Caco-2 (cell line): ENCODE measurements at regions of chr16 and their contacts with region 1.

Region 1: GRCh38 chr16:58487566-58488351 is 12.2 kb upstream of the NDRG4 start:
- DNase-seq: peak; percentile 90 to 92
- H3K4me3 ChIP-seq: no peak overlapping the region
- H3K4me3 Mint-ChIP-seq: no peak overlapping the region
- H3K27ac Mint-ChIP-seq: no peak overlapping the region
- H3K4me1 ChIP-seq: no peaks in the 10 kb centered on the region
- H3K4me1 Mint-ChIP-seq: no peaks in the 10 kb centered on the region
- H3K27me3 ChIP-seq: no peaks in the 10 kb centered on the region
- H3K27me3 Mint-ChIP-seq: peaks cover 4% of the 10 kb centered on the region
- CTCF ChIP-seq: peak; percentile 98 to 99

Region 2: DNA sequence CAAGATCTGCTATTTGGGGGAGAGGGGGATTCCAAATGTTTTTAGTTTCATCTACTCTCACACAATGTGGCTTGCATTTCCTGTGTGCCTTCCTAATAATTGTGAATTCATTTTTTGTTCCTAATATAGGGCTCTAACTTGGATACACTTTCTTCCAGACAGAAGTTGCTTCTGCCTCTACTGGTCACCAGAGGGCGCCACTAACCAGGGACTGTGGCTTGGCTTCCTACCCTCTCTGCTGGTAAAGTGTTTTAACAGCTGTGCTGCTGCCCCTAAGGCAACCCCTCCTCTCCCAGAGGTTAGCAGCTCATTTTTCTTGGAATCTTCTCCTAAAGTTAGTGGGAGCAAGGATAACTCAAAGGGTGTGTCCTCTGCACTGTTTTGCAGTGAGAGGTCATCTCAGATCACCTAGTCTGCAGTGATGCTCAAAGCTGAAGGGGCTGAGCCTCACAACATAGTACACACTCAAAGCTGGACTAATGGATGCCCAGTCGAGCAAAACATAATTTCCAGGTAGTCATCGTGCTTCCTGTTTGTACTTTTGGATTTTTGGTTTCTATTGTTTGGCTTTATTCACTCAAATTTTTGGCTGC is 187.9 kb before region 1 on chr16:
- CTCF ChIA-PET with region 1: interaction called, 5 read pairs
- POLR2A ChIA-PET with region 1: no interaction called
- intact Hi-C with region 1: loop called (anchors 1 kb)
- DNase-seq: peak in 1 of 2 experiments; percentile 32
- H3K4me3 ChIP-seq: no peak overlapping the region
- H3K4me3 Mint-ChIP-seq: no peak overlapping the region
- H3K27ac Mint-ChIP-seq: no peak overlapping the region
- H3K4me1 ChIP-seq: no peaks in the 10 kb centered on the region
- H3K4me1 Mint-ChIP-seq: no peaks in the 10 kb centered on the region
- H3K27me3 ChIP-seq: no peaks in the 10 kb centered on the region
- H3K27me3 Mint-ChIP-seq: peaks cover 5% of the 10 kb centered on the region
- CTCF ChIP-seq: peak; percentile 60 to 63

Region 3: GRCh38 chr16:58392215-58393137 is 95.3 kb before region 1 on chr16 and contains the start of gene GINS3:
- CTCF ChIA-PET with region 1: interaction called, 5 read pairs
- POLR2A ChIA-PET with region 1: no interaction called
- intact Hi-C with region 1: loop called (anchors 5 kb)
- DNase-seq: peak; percentile 95 to 96
- H3K4me3 ChIP-seq: peak within 1 kb of the TSS; percentile 82
- H3K4me3 Mint-ChIP-seq: peak within 1 kb of the TSS; percentile 98
- H3K27ac Mint-ChIP-seq: peak within 1 kb of the TSS; percentile 97
- H3K4me1 ChIP-seq: no peaks in the 10 kb centered on the region
- H3K4me1 Mint-ChIP-seq: no peaks in the 10 kb centered on the region
- H3K27me3 ChIP-seq: no peaks in the 10 kb centered on the region
- H3K27me3 Mint-ChIP-seq: peaks cover 9% of the 10 kb centered on the region
- CTCF ChIP-seq: no peak
- total RNA-seq, gene GINS3: 14.2 and 15.2 TPM in 2 replicates

Region 4: GRCh38 chr16:58402796-58403195 is 85.0 kb before region 1 on chr16:
- CTCF ChIA-PET with region 1: no interaction called
- POLR2A ChIA-PET with region 1: no interaction called
- intact Hi-C with region 1: no loop called
- DNase-seq: no peak
- H3K4me3 ChIP-seq: no peak overlapping the region
- H3K4me3 Mint-ChIP-seq: no peak overlapping the region
- H3K27ac Mint-ChIP-seq: no peak overlapping the region
- H3K4me1 ChIP-seq: no peaks in the 10 kb centered on the region
- H3K4me1 Mint-ChIP-seq: no peaks in the 10 kb centered on the region
- H3K27me3 ChIP-seq: no peaks in the 10 kb centered on the region
- H3K27me3 Mint-ChIP-seq: no peaks in the 10 kb centered on the region
- CTCF ChIP-seq: no peak

Region 5: DNA sequence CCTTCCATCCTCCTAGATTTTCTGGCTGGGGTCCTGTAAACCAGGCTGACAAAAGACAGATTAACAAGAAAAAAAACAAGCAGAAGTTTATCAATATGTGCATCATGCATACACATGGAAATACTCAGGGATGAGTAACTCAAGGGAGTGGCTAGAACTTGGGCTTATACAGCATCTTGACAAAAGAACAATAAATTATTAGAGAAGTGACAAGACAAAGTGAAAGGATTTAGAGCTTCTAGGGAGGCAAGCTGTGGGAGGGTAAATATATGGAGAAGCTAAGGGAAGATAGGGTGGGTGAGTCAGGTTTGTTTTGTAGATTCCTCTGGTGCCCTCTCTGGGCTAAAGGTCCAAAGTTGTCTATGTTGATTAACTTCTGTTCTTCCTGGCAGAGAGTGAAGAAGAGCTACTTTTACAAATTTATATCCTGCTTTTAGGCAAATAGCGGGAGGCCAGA is 35.8 kb before region 1 on chr16:
- CTCF ChIA-PET with region 1: interaction called, 12 read pairs
- POLR2A ChIA-PET with region 1: no interaction called
- intact Hi-C with region 1: no loop called
- DNase-seq: peak in 1 of 2 experiments; percentile 49
- H3K4me3 ChIP-seq: no peak overlapping the region
- H3K4me3 Mint-ChIP-seq: no peak overlapping the region
- H3K27ac Mint-ChIP-seq: no peak overlapping the region
- H3K4me1 ChIP-seq: peaks cover 33% of the 10 kb centered on the region
- H3K4me1 Mint-ChIP-seq: peaks cover 25% of the 10 kb centered on the region
- H3K27me3 ChIP-seq: no peaks in the 10 kb centered on the region
- H3K27me3 Mint-ChIP-seq: no peaks in the 10 kb centered on the region
- CTCF ChIP-seq: no peak

Region 6: DNA sequence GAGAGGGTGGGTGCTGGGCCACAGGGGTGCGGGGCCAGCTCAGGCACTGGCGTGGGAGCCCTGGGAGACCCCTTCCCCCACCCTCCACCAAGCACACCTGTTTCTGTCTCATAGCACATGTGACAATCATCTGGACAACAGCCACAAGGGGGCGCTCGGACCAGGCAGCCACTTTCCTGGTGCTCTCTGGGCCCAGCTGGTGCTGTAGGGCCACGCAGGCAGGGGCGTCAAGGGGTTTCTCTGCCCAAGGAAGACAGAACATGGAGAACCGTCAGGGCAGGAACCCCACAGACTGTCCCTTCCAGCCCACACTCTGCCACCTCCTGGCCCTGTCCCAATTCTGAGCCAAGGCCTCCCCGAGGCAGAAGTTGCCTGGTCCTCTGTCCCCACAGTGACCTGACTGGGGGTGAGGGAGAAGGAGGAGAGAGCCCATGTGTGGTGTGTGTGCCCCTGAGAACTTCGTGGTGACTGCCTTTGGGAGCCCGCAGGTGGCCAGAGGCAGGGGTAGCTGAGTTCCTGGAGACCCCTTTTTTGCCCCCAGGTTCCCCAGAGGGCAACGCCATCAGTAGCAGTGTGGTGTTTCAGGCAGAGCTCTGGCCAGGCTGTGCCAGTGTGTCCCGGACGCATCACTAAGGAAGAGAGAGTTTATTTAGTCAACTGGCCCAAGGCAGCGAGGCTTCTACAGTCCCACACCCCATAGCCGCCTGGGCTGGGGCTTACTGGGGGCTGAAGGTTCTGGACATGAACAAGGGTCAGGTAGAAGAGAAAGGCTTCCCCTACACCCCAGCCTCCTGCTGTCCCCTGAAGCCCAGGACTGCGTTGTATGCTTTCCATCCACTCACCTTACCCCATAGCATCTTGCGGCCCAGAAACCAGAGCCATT is 24.4 kb after region 1 on chr16:
- CTCF ChIA-PET with region 1: no interaction called
- POLR2A ChIA-PET with region 1: no interaction called
- intact Hi-C with region 1: no loop called
- DNase-seq: peak; percentile 85 to 89
- H3K4me3 ChIP-seq: no peak overlapping the region
- H3K4me3 Mint-ChIP-seq: peak overlapping the region; percentile 32
- H3K27ac Mint-ChIP-seq: peak overlapping the region; percentile 61
- H3K4me1 ChIP-seq: peaks cover 18% of the 10 kb centered on the region
- H3K4me1 Mint-ChIP-seq: peaks cover 30% of the 10 kb centered on the region
- H3K27me3 ChIP-seq: no peaks in the 10 kb centered on the region
- H3K27me3 Mint-ChIP-seq: no peaks in the 10 kb centered on the region
- CTCF ChIP-seq: peak; percentile 83 to 93

Region 7: DNA sequence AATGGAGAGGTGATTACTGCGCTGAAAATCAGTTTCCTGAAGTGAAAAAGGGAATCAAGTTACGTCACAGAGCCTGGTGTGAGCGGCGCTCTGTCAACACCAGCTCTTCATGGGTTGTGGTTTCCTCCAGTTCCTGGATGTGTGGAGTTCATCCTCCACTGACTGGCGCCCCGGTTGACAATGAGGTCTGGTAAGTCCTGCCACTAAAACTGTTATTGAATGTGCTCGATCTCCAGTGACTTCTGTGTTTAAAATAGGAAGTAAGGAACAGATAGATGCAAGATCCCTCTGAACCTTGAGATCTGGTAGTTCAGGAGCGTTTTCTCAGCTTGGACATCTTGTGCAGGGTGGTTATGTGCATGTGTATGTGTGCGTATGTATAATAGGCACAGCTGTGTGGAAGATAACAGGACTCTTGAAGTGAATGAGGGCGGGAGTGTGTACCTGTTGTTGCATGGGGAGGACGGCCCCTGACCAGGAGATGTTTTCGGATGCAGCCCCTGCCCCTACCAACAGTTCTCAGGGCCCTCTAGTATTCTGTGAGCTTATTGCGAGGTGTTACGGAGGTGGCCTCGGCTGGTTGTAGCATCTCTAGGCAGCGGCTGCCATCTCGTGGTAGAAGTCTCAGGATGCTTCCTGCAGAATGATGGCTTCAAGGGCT is 268.4 kb after region 1 on chr16:
- CTCF ChIA-PET with region 1: interaction called, 11 read pairs
- POLR2A ChIA-PET with region 1: no interaction called
- intact Hi-C with region 1: no loop called
- DNase-seq: peak; percentile 81 to 83
- H3K4me3 ChIP-seq: no peak overlapping the region
- H3K4me3 Mint-ChIP-seq: no peak overlapping the region
- H3K27ac Mint-ChIP-seq: no peak overlapping the region
- H3K4me1 ChIP-seq: no peaks in the 10 kb centered on the region
- H3K4me1 Mint-ChIP-seq: no peaks in the 10 kb centered on the region
- H3K27me3 ChIP-seq: no peaks in the 10 kb centered on the region
- H3K27me3 Mint-ChIP-seq: peaks cover 10% of the 10 kb centered on the region
- CTCF ChIP-seq: peak; percentile 85 to 94